ENCODE measurements at regions of chr12 and their contacts with region 1.

Region 1: GRCh38 chr12:6851921-6852650 is at the start of gene USP5:
- DNase-seq: peak; percentile 98
- ATAC-seq: peak; percentile 86
- H3K4me3 ChIP-seq: peak within 1 kb of the TSS; percentile 79 to 95 (median 85)
- H3K27ac ChIP-seq: peak within 1 kb of the TSS; percentile 82
- H3K4me1 ChIP-seq: peaks cover 33% of the 10 kb centered on the region
- H3K27me3 ChIP-seq: no peaks in the 10 kb centered on the region
- CTCF ChIP-seq: 0 out of 2 replicates have a peak, but pooled peaks have one; percentile 7
- EP300 ChIP-seq: no peak
- POLR2A ChIP-seq: peak; percentile 70 to 90
- RAD21 ChIP-seq: peak; percentile 65
- total RNA-seq, gene USP5: 53.4 and 56.0 TPM in 2 replicates

Region 2: GRCh38 chr12:6688999-6689882 is 162.8 kb before region 1 on chr12 and contains the start of gene ZNF384:
- CTCF ChIA-PET with region 1: no interaction called
- POLR2A ChIA-PET with region 1: interaction called, 21 read pairs
- in situ Hi-C with region 1: no loop called
- intact Hi-C with region 1: no loop called
- DNase-seq: peak; percentile 99
- ATAC-seq: peak; percentile 88
- H3K4me3 ChIP-seq: peak within 1 kb of the TSS; percentile 88 to 99 (median 89)
- H3K27ac ChIP-seq: peak within 1 kb of the TSS; percentile 98
- H3K4me1 ChIP-seq: peaks cover 51% of the 10 kb centered on the region
- H3K27me3 ChIP-seq: peaks cover 0 to 3% of the 10 kb centered on the region in 2 experiments; a peak in 3 of 5 replicates
- CTCF ChIP-seq: peak; percentile 31
- EP300 ChIP-seq: peak in 1 of 2 experiments; percentile 46; a peak in 2 of 4 replicates
- POLR2A ChIP-seq: peak; percentile 57 to 76
- RAD21 ChIP-seq: no peak
- total RNA-seq, gene ZNF384: 23.6 and 24.1 TPM in 2 replicates

Region 3: DNA sequence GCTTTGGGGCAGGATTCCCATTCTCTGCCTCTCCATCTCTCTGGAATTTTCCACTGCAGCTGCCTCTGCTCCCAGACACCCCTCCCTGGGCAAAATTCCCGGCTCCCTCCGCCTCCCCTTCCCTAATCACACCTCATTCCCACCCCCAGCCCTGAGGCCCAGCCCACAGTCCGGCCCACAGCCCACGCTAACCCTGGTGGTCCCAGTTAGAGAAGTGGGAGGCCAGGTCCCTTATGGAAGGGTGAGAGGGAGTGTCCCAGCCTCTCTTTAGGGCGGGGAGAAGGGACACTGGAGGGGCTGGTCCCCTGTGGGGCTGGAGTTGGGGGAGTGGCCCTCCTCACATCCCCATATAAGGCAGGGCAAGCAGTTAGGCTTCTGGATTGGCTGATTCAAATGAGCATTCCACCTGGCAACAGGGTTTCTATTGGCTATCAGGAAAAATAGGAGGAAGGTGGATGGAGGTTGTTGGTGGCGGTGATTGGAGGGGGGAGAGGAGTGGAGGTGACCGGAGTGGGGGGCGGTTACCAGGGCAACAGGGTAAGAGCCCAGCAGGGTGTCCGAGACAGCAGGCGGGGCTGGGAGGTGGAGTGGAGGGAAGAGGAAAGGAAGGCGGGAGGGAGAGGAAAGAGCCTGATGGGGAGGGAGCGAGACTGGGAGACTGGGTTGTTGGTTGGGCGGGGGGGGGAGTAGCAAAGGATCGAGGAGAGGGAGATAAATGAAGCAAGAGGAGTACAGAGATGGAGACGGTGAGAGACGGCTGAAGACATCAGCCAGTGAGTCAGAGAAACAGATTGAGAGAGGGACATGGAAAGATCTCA is 87.9 kb before region 1 on chr12:
- CTCF ChIA-PET with region 1: no interaction called
- POLR2A ChIA-PET with region 1: interaction called, 27 read pairs
- in situ Hi-C with region 1: no loop called
- intact Hi-C with region 1: no loop called
- DNase-seq: peak; percentile 95
- ATAC-seq: peak; percentile 82
- H3K4me3 ChIP-seq: peak overlapping the region; percentile 41 to 72 (median 51)
- H3K27ac ChIP-seq: peak overlapping the region; percentile 54
- H3K4me1 ChIP-seq: peaks cover 77% of the 10 kb centered on the region
- H3K27me3 ChIP-seq: no peaks in the 10 kb centered on the region
- CTCF ChIP-seq: no peak
- EP300 ChIP-seq: peak in 1 of 2 experiments; percentile 82; a peak in 2 of 4 replicates
- POLR2A ChIP-seq: no peak
- RAD21 ChIP-seq: no peak

Region 4: GRCh38 chr12:6839482-6840201 is 12.4 kb before region 1 on chr12:
- CTCF ChIA-PET with region 1: interaction called, 3 read pairs
- POLR2A ChIA-PET with region 1: interaction called, 17 read pairs
- in situ Hi-C with region 1: no loop called
- intact Hi-C with region 1: no loop called
- DNase-seq: no peak
- ATAC-seq: no peak
- H3K4me3 ChIP-seq: no peak overlapping the region
- H3K27ac ChIP-seq: no peak overlapping the region
- H3K4me1 ChIP-seq: no peaks in the 10 kb centered on the region
- H3K27me3 ChIP-seq: no peaks in the 10 kb centered on the region
- CTCF ChIP-seq: no peak
- EP300 ChIP-seq: no peak
- POLR2A ChIP-seq: no peak
- RAD21 ChIP-seq: no peak

Region 5: DNA sequence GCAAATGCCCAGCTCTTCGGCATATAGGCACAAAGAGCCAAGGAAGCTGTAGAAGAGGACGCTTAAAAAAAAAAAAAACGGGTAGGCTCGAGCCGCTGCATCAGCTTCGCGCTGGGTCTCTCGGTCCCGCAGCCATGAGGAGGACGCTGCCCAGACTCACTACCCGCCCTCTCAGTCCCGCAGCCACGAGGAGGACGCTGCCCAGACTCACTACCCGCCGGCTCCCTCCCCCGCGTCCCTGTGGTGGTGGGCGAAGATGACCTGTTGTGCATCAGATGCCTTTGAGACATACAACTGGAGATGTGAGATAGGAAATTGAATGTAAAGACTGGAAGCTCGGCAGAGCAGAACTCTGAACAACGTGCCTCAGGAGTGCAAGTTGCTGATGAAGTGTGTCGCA is 32.5 kb after region 1 on chr12:
- CTCF ChIA-PET with region 1: no interaction called
- POLR2A ChIA-PET with region 1: interaction called, 10 read pairs
- in situ Hi-C with region 1: no loop called
- intact Hi-C with region 1: no loop called
- DNase-seq: no peak
- ATAC-seq: no peak
- H3K4me3 ChIP-seq: no peak overlapping the region
- H3K27ac ChIP-seq: no peak overlapping the region
- H3K4me1 ChIP-seq: peaks cover 61% of the 10 kb centered on the region
- H3K27me3 ChIP-seq: no peaks in the 10 kb centered on the region
- CTCF ChIP-seq: no peak
- EP300 ChIP-seq: no peak
- POLR2A ChIP-seq: no peak
- RAD21 ChIP-seq: no peak